ENCODE measurements at regions of chr4 and their contacts with region 1.

Region 1: GRCh38 chr4:145936142-145936996 is 2.3 kb downstream of the ZNF827 start:
- DNase-seq: peak; percentile 73 to 82 (median 74)
- H3K4me3 ChIP-seq: peak overlapping the region; percentile 62 to 80 (median 66)
- H3K27ac ChIP-seq: peak overlapping the region; percentile 82 to 95 (median 87)
- H3K4me1 ChIP-seq: peaks cover 5 to 46% of the 10 kb centered on the region in 2 donors
- H3K27me3 ChIP-seq: no peaks in the 10 kb centered on the region
- CTCF ChIP-seq: peak in 4 of 6 experiments; percentile 16 to 41 (median 21)
- POLR2A ChIP-seq: peak in 1 of 2 donors; percentile 63

Region 2: DNA sequence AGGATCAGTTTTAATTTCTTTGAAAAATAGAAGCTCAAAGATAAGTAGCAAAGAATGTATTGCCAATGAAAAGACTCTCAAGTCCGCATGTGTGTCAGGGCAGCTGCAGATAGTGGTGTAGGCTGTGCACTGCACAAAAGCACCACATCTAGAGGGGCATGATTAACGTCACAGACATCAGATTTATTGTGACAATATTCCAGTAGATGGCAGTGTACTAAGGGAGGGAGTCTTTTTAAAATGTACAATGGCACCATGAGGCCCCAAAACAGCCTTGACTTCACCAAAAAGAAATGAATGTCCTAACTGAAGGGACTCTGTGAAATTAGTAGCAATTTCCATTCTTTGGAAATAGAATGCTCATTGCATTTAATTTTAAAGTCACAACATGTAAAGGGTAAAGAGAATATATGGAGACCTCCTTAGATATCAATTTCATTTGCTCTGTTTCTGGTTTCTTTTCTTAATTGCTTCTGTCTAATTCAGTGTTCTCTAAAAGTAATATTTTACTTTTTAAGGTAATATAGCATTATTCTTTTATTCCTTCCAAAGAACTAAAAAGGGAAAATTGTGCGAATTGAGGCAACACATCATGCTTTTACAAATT is 96.1 kb before region 1 on chr4:
- intact Hi-C with region 1: loop called in 1 of 2 experiments (anchors 10 kb)
- DNase-seq: peak in 4 of 7 donors; percentile 18 to 42 (median 25)
- H3K4me3 ChIP-seq: no peak overlapping the region
- H3K27ac ChIP-seq: no peak overlapping the region
- H3K4me1 ChIP-seq: no peaks in the 10 kb centered on the region
- H3K27me3 ChIP-seq: no peaks in the 10 kb centered on the region
- CTCF ChIP-seq: peak; percentile 31 to 64 (median 56)
- POLR2A ChIP-seq: no peak

Region 3: GRCh38 chr4:145887241-145887991 is 49.0 kb before region 1 on chr4:
- intact Hi-C with region 1: loop called in 1 of 2 experiments (anchors 5 kb)
- DNase-seq: peak in 5 of 7 donors; percentile 29 to 57 (median 48)
- H3K4me3 ChIP-seq: peak overlapping the region in 1 of 4 donors; percentile 7
- H3K27ac ChIP-seq: peak overlapping the region in 4 of 5 donors; percentile 36 to 80 (median 60)
- H3K4me1 ChIP-seq: peaks cover 10 to 26% of the 10 kb centered on the region in 2 donors
- H3K27me3 ChIP-seq: no peaks in the 10 kb centered on the region
- CTCF ChIP-seq: peak in 3 of 6 experiments; percentile 12 to 29 (median 21)
- POLR2A ChIP-seq: no peak

Region 4: DNA sequence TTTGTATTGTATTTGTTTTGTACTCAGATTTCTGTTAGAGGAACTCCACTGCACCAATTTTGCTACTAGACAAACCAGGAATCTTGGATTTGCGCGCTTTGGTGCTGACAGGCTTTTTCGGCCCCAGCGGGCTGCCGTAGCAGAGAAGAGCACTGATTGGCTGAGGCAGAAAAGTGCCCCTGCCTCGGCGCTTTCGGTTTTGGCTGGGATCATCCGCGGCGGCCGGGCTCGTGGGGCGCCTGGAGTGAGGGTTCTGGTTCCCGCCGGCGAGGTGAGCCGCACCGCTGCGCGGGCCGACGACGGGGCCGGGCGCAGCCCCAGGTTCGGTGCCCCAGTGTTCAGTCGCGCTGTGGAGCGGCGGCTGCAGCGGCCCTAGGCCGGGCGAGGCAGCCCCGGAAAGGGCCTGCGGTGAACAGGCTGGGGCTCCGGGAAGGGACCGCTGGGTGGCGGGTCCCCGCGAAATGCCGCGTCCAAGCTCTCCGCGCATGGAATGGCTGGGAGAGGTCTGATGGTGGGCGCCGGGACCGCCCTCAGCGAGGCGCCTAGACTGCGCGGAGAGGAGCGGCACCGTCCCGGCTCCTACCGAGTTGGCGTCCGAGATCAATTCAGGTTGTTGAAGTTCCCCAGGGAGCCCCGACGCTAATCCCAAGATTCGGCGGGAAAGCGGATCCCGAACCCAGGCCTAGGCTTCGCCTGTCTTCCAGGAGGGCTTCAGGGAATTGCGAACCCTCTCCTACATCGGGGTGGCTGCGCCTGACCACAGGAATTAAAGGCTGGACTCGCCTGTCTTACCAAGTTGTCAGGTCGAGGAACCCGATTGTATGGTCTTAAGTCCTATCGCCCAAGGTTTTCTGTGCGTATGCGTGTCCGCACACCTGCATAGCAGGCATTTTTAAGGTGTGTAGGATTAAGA is 239.4 kb after region 1 on chr4 and contains the start of gene LSM6:
- intact Hi-C with region 1: loop called in 1 of 2 experiments (anchors 10 kb)
- DNase-seq: peak; percentile 89 to 94 (median 90)
- H3K4me3 ChIP-seq: peak within 1 kb of the TSS; percentile 20 to 95 (median 70)
- H3K27ac ChIP-seq: peak within 1 kb of the TSS; percentile 68 to 95 (median 93)
- H3K4me1 ChIP-seq: peaks cover 10 to 51% of the 10 kb centered on the region in 2 donors
- H3K27me3 ChIP-seq: no peaks in the 10 kb centered on the region
- CTCF ChIP-seq: peak in 3 of 6 experiments; percentile 11 to 26 (median 18)
- POLR2A ChIP-seq: peak in 1 of 2 donors; percentile 62
- total RNA-seq, gene LSM6: 10.7 to 49.4 (median 26.0) TPM

Measured in adrenal gland (tissue), 19 donors.